Common myeloid progenitor, CD34-positive (primary cell): ENCODE measurements at regions of chr10 and their contacts with region 1.

Region 1: GRCh38 chr10:92240289-92241157 is 50.4 kb downstream of the CPEB3 start:
- DNase-seq: peak; percentile 73 to 87 (median 83)
- H3K4me3 ChIP-seq: peak overlapping the region; percentile 65 to 99 (median 83)
- H3K27ac ChIP-seq: peak overlapping the region in 1 of 2 experiments; percentile 71
- H3K4me1 ChIP-seq: peaks cover 12 to 33% (median 19%) of the 10 kb centered on the region in 4 experiments
- H3K27me3 ChIP-seq: peaks cover 0 to 10% (median 4%) of the 10 kb centered on the region in 5 experiments

Region 2: DNA sequence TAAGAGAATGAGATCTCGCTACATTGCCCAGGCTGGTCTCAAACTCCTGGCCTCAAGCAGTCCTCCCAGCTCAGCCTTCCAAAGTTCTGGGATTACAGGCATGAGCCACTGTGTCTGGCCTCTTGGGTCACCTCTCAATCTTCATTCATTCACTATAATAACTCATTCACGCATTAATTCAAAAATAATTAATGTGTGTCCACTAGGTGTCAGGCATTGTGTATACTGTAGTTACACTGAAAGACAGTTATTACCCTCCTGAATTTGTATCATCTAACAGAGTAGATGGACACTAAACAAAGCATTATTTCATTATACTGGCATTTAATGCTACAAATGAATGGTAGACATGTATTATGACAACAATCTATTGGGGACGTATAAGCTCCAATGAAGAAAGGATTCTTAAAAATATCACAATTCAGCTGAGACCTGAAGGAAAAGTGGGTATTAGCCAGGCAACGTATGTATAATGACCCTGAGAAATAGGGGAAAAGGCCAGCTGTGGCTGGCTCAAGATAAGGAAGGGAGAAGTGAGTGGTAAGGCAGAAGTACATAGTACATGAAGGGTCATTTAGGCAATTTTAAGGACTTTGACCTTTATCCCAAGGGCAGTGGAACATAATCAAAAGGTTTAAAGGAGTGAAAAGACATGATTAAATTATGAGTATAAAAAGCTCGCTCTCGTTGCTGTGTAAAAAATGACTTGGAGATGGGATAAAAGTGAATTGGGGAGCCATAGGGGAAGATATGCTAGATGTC is 166.2 kb before region 1 on chr10:
- CTCF ChIA-PET with region 1: no interaction called
- POLR2A ChIA-PET with region 1: no interaction called
- DNase-seq: peak in 2 of 3 donors; percentile 23 to 31
- H3K4me3 ChIP-seq: no peak overlapping the region
- H3K27ac ChIP-seq: no peak overlapping the region
- H3K4me1 ChIP-seq: no peaks in the 10 kb centered on the region
- H3K27me3 ChIP-seq: no peaks in the 10 kb centered on the region

Region 3: GRCh38 chr10:92219516-92219915 is 21.0 kb before region 1 on chr10:
- CTCF ChIA-PET with region 1: no interaction called
- POLR2A ChIA-PET with region 1: interaction called, 10 read pairs
- DNase-seq: no peak
- H3K4me3 ChIP-seq: no peak overlapping the region
- H3K27ac ChIP-seq: no peak overlapping the region
- H3K4me1 ChIP-seq: no peaks in the 10 kb centered on the region
- H3K27me3 ChIP-seq: no peaks in the 10 kb centered on the region

Region 4: DNA sequence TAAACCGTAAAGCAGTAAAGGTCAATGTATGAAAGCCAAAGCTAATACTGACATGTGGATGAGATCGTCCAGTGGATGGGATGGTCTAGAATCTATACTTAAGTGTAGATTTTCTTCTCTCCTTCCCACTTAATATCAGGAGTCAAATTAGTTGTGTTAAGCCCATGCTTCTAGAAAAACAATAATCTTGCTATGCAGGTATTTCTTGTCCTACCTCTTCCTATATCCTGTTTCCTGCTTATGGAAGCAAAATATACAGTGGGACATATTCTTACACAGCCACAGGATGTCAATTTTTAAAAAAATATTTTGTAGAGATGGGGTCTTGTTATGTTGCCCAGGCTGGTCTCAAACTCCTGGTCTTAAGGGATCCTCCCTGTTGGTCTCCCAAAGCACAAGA is 22.9 kb after region 1 on chr10:
- CTCF ChIA-PET with region 1: no interaction called
- POLR2A ChIA-PET with region 1: no interaction called
- DNase-seq: no peak
- H3K4me3 ChIP-seq: no peak overlapping the region
- H3K27ac ChIP-seq: no peak overlapping the region
- H3K4me1 ChIP-seq: no peaks in the 10 kb centered on the region
- H3K27me3 ChIP-seq: no peaks in the 10 kb centered on the region